Mammary epithelial cell (primary cell): ENCODE measurements at regions of chr14 and their contacts with region 1.

Region 1: DNA sequence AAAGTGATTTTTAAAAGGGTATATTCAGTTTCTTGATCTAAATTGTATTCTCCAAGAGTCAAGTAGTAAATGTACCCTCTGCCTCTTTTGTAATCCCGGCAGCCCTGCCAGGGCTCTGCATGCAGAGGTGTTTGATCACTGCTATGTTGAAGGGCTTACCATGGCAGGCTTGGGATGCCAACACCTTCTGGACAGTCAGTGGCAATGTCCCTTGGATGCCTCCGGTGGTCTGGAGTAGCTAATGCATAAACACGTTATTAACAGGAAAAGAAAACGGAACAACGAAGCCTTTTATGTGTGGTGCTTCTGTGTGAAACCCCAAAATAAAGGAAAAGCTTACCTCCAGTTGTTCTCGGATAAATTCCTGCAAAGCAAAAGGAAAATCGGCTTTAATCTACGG is 19.9 kb downstream of the EIF2B2 start:
- DNase-seq: no peak
- H3K4me3 ChIP-seq: no peak overlapping the region
- H3K27ac ChIP-seq: no peak overlapping the region
- H3K4me1 ChIP-seq: no peaks in the 10 kb centered on the region
- H3K27me3 ChIP-seq: no peaks in the 10 kb centered on the region
- CTCF ChIP-seq: peak; percentile 45 to 63

Region 2: GRCh38 chr14:74919421-74920165 is 103.1 kb before region 1 on chr14:
- CTCF ChIA-PET with region 1: no interaction called
- dilution Hi-C with region 1: no loop called
- in situ Hi-C with region 1: no loop called
- intact Hi-C with region 1: no loop called
- DNase-seq: peak; percentile 27
- H3K4me3 ChIP-seq: no peak overlapping the region
- H3K27ac ChIP-seq: no peak overlapping the region
- H3K4me1 ChIP-seq: peaks cover 9% of the 10 kb centered on the region
- H3K27me3 ChIP-seq: no peaks in the 10 kb centered on the region
- CTCF ChIP-seq: no peak

Region 3: DNA sequence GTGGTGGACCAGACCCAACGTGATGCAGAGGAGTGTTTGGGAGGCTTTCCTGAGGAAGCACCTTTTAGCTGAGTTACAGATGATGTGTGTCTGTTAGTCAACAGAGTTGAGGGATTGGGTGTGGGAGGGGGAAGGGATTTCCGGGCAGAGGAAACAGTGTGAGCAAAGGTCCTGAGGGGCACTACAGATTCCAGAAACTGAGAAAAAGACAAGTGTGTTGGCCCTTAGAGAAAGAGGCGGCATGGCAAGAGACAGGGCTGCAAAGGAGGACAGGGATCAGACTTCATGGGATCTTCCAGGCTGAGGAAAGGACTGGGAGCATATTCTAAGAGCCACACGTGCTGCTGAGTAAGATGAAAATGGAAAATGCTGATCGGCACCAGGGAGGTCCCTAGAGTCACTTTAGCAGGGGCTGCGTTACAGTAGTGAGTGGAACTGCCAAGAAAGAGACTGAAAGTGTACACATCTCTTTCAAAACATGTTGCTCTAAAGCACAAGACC is 90.2 kb before region 1 on chr14:
- CTCF ChIA-PET with region 1: no interaction called
- dilution Hi-C with region 1: loop called (anchors 5 kb)
- in situ Hi-C with region 1: no loop called
- intact Hi-C with region 1: no loop called
- DNase-seq: no peak
- H3K4me3 ChIP-seq: no peak overlapping the region
- H3K27ac ChIP-seq: no peak overlapping the region
- H3K4me1 ChIP-seq: no peaks in the 10 kb centered on the region
- H3K27me3 ChIP-seq: no peaks in the 10 kb centered on the region
- CTCF ChIP-seq: no peak

Region 4: DNA sequence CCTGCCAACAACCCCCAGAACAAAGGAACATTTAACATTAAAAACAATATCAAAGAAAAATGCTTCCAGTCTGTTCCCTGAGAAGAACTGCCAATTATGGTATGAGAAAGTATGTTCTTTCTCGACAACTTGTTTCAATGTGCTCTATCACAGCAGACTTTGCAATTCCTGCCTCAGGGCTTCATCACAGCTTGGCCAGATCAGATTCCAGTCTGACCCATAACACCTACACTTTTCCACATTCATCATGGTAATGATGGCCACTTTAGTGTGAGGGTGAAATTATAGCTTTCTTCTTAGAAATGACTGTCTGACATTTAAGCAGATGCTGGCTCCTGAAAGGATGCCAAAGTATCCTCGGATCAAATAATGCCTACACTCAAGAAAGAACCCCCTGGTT is 87.2 kb after region 1 on chr14:
- CTCF ChIA-PET with region 1: no interaction called
- dilution Hi-C with region 1: loop called (anchors 5 kb)
- in situ Hi-C with region 1: no loop called
- intact Hi-C with region 1: no loop called
- DNase-seq: no peak
- H3K4me3 ChIP-seq: no peak overlapping the region
- H3K27ac ChIP-seq: no peak overlapping the region
- H3K4me1 ChIP-seq: no peaks in the 10 kb centered on the region
- H3K27me3 ChIP-seq: no peaks in the 10 kb centered on the region
- CTCF ChIP-seq: no peak